Tibial artery (tissue), 4 donors: ENCODE measurements at regions of chr7 and their contacts with region 1.

Region 1: GRCh38 chr7:150903606-150904005 is 51.3 kb downstream of the AOC1 start:
- DNase-seq: no peak
- H3K4me3 ChIP-seq: no peak overlapping the region
- H3K27ac ChIP-seq: peak overlapping the region in 1 of 2 donors; percentile 42
- H3K4me1 ChIP-seq: peaks cover 0 to 15% (median 9%) of the 10 kb centered on the region in 4 donors
- H3K27me3 ChIP-seq: no peaks in the 10 kb centered on the region
- CTCF ChIP-seq: no peak

Region 2: GRCh38 chr7:151104411-151105235 is 201.0 kb after region 1 on chr7:
- intact Hi-C with region 1: loop called (anchors 5 kb)
- DNase-seq: no peak
- H3K4me3 ChIP-seq: no peak overlapping the region
- H3K27ac ChIP-seq: no peak overlapping the region
- H3K4me1 ChIP-seq: peaks cover 0 to 17% (median 6%) of the 10 kb centered on the region in 4 donors
- H3K27me3 ChIP-seq: no peaks in the 10 kb centered on the region
- CTCF ChIP-seq: no peak

Region 3: DNA sequence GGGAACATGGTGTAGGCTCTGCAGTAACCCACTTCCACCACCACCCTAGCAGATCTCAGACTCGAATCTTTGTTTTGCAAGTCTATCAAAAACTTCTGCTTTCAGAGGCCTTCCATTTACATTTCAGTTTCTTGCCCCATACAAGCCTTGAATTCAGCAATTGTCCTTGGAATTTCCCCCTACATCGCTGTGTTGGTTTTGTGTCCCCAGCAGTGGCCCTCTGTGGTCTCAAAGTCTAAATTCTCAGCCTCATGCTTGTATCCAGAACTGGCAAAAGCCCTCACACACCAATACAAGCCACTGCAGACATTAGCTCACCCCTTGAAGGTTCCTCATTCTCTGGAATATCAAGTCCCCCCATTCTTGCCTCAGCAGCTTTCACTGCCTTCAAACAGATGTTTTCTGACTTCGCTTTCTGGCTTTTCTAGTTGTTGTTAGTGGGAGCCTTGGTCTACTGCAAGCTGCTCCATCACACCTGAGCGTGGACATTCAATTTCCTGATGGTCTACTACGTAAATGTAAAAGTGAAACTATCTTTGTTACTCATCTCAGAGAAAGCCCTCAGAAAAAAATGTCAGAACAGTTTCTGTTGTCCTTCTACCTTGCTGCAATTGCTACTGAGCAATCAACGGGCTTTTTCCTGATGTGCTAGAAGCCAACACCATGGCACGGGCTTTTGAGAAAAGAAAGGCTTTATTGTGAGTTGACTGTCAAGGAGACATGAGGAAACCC is 436.2 kb after region 1 on chr7:
- intact Hi-C with region 1: no loop called
- DNase-seq: no peak
- H3K4me3 ChIP-seq: no peak overlapping the region
- H3K27ac ChIP-seq: no peak overlapping the region
- H3K4me1 ChIP-seq: peaks cover 0 to 28% (median 15%) of the 10 kb centered on the region in 4 donors
- H3K27me3 ChIP-seq: no peaks in the 10 kb centered on the region
- CTCF ChIP-seq: no peak